ENCODE measurements at regions of chr15 and their contacts with region 1.

Region 1: GRCh38 chr15:91150502-91151160 is 50.6 kb downstream of the SV2B start:
- DNase-seq: no peak
- H3K4me3 ChIP-seq: no peak overlapping the region
- H3K27ac ChIP-seq: no peak overlapping the region
- H3K4me1 ChIP-seq: no peaks in the 10 kb centered on the region
- H3K27me3 ChIP-seq: peaks cover 2% of the 10 kb centered on the region
- CTCF ChIP-seq: no peak

Region 2: DNA sequence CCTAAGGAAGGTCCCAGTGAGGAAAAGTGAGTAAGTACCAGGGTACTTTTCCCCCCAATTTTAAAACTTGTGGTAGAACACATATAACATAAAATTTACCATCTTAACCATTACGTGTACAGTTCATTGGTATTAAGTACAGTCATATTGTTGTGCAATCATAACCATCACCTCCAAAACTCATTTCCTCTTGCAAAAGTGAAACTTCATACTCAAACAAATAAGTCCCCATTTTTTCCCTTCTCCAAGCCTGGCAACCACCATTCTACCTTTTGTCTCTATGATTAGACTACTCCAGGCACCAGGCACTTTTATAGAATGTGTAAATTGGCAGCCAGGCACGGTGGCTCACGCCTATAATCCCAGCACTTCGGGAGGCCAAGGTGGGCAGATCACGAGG is 168.5 kb before region 1 on chr15:
- CTCF ChIA-PET with region 1: no interaction called
- dilution Hi-C with region 1: no loop called
- in situ Hi-C with region 1: no loop called
- intact Hi-C with region 1: no loop called
- DNase-seq: peak; percentile 57
- H3K4me3 ChIP-seq: no peak overlapping the region
- H3K27ac ChIP-seq: no peak overlapping the region
- H3K4me1 ChIP-seq: no peaks in the 10 kb centered on the region
- H3K27me3 ChIP-seq: no peaks in the 10 kb centered on the region
- CTCF ChIP-seq: no peak

Region 3: DNA sequence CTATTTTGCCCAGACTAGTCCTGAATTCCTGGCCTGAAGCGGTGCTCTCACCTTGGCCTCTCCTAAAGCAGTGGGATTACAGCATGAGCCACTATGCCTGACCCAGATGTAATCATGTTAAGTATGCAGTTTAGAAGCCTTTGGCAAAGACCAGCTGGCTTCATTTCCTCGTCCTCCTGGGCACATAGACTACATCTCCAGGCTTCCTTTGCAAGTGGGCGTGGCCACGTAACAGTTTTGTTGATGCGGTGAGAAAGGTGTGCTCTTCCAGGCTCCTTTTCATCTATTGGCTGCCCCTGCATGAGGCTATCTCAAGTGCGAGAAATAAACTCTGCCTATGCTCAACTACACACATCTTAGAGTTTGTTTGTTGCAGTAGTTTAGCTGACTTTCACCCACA is 37.6 kb before region 1 on chr15:
- CTCF ChIA-PET with region 1: no interaction called
- dilution Hi-C with region 1: loop called (anchors 5 kb)
- in situ Hi-C with region 1: no loop called
- intact Hi-C with region 1: no loop called
- DNase-seq: peak; percentile 13
- H3K4me3 ChIP-seq: no peak overlapping the region
- H3K27ac ChIP-seq: no peak overlapping the region
- H3K4me1 ChIP-seq: peaks cover 6% of the 10 kb centered on the region
- H3K27me3 ChIP-seq: peaks cover 5% of the 10 kb centered on the region
- CTCF ChIP-seq: no peak